Activated CD4-positive, alpha-beta T cell treated with anti-CD3 and anti-CD28 coated beads, Interleukin-2, amount 10 ng/mL, durations not matched to agents 24 days and 14 days (primary cell): ENCODE measurements at regions of chr11 and their contacts with region 1.

Region 1: GRCh38 chr11:46352063-46352841 is 5.0 kb downstream of the DGKZ start:
- DNase-seq: peak; percentile 93
- H3K4me3 Mint-ChIP-seq: peak overlapping the region; percentile 86
- H3K27ac Mint-ChIP-seq: peak overlapping the region; percentile 90
- H3K4me1 Mint-ChIP-seq: peaks cover 58% of the 10 kb centered on the region
- H3K27me3 Mint-ChIP-seq: no peaks in the 10 kb centered on the region

Region 2: DNA sequence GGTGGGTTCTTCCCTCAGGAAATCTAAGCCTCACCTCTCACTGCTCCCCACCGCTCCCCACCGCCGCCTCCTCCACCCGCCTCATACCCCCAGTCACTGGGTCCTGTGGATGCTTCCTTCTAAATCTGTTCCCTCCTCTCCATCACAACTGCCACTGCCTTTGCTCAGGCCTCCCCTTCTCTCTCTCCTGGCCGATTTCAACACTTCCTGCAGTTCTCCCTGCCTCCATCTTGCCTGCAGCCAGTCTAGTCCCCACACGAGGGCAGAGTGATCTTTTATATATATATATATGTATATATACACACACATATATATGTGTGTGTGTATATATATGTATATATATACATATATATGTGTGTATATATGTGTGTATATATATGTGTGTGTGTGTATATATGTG is 47.0 kb before region 1 on chr11:
- intact Hi-C with region 1: no loop called
- DNase-seq: no peak
- H3K4me3 Mint-ChIP-seq: no peak overlapping the region
- H3K27ac Mint-ChIP-seq: peak overlapping the region; percentile 22
- H3K4me1 Mint-ChIP-seq: peaks cover 9% of the 10 kb centered on the region
- H3K27me3 Mint-ChIP-seq: peaks cover 2% of the 10 kb centered on the region

Region 3: GRCh38 chr11:46322759-46323158 is 29.5 kb before region 1 on chr11:
- intact Hi-C with region 1: no loop called
- DNase-seq: no peak
- H3K4me3 Mint-ChIP-seq: no peak overlapping the region
- H3K27ac Mint-ChIP-seq: no peak overlapping the region
- H3K4me1 Mint-ChIP-seq: peaks cover 11% of the 10 kb centered on the region
- H3K27me3 Mint-ChIP-seq: peaks cover 14% of the 10 kb centered on the region

Region 4: DNA sequence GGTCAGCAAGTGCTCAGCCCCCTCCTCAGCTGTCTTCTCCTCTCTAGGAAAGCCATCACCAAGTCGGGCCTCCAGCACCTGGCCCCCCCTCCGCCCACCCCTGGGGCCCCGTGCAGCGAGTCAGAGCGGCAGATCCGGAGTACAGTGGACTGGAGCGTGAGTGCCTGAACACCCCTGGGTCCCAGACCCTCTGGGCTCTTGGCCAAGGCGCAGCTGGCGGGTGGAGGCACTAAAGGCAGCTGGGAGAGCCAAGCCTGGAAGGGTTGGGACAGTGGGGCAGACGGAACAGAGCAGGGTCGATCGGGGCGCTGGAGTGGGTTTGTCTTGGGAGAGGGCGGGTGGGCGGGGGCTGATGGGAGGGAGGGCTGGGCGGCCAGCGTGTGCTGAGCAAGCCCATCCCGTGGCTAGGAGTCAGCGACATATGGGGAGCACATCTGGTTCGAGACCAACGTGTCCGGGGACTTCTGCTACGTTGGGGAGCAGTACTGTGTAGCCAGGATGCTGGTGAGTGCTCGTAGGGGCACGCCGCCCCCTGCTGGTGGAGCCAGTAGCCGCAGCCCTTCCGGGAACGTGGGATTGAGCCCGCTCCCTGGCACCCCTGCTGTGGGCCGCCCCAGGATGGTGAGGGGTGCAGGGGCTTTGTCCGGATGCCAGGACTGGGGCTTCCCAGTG is 15.1 kb after region 1 on chr11:
- intact Hi-C with region 1: loop called (anchors 1 kb)
- DNase-seq: peak; percentile 92
- H3K4me3 Mint-ChIP-seq: no peak overlapping the region
- H3K27ac Mint-ChIP-seq: peak overlapping the region; percentile 71
- H3K4me1 Mint-ChIP-seq: peaks cover 17% of the 10 kb centered on the region
- H3K27me3 Mint-ChIP-seq: no peaks in the 10 kb centered on the region

Region 5: GRCh38 chr11:46410021-46410420 is 57.8 kb after region 1 on chr11:
- intact Hi-C with region 1: no loop called
- DNase-seq: no peak
- H3K4me3 Mint-ChIP-seq: no peak overlapping the region
- H3K27ac Mint-ChIP-seq: no peak overlapping the region
- H3K4me1 Mint-ChIP-seq: peaks cover 6% of the 10 kb centered on the region
- H3K27me3 Mint-ChIP-seq: no peaks in the 10 kb centered on the region

Region 6: DNA sequence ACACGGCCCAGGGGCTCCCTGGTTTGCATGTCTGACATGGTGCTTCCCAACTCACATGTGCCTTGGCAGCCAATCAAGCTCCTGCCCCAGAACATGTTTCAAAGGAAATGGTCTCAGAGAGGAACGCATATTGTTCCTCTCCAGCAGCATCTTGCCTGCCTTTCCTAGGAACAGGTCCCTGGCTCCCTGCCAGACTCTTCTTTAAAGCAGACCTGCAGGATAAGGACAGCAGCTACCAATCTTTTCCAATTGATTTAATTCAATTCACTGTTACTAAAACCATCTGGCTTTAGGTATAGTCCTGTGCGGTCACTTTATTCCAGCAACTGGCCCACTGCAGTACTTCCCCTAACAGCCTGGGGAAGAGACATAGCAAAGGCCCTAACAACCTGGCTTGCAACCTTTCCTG is 161.7 kb after region 1 on chr11:
- intact Hi-C with region 1: no loop called
- DNase-seq: no peak
- H3K4me3 Mint-ChIP-seq: no peak overlapping the region
- H3K27ac Mint-ChIP-seq: no peak overlapping the region
- H3K4me1 Mint-ChIP-seq: peaks cover 9% of the 10 kb centered on the region
- H3K27me3 Mint-ChIP-seq: no peaks in the 10 kb centered on the region